HEK293T (cell line): ENCODE measurements at regions of chr19 and their contacts with region 1.

Region 1: DNA sequence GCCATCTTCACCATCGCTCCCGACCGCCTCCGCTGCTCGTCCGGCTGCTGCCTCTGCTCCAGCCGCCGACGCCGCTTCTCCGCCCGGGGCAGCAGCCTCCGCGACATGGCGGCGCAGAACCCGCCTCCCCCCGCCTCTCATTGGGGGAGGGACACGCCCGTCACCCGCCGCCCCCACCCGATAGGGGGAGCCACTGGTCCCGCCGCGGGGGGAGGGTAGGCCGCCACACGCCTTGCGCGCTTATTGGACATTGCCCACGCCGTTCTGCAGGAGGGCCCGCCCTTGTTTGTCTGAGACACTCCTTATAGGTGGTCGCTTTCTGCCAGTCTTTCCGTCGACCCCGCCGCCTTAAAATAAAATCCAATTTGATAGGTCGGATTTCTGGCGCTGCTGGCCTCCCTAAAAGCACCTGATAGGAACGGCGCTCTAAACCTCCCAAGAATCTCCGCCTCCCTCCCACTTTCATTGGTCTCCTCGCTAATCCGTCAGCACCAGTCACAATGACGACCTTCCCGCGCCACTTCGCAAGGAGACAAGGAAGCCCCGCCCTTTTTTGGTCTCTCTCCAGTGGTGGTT is at the start of gene HNRNPL:
- DNase-seq: peak; percentile 90

Region 2: GRCh38 chr19:38707512-38708114 is 142.3 kb before region 1 on chr19:
- CTCF ChIA-PET with region 1: no interaction called
- POLR2A ChIA-PET with region 1: no interaction called
- DNase-seq: no peak

Region 3: GRCh38 chr19:38792250-38793111 is 57.5 kb before region 1 on chr19:
- CTCF ChIA-PET with region 1: no interaction called
- POLR2A ChIA-PET with region 1: no interaction called
- DNase-seq: no peak

Region 4: DNA sequence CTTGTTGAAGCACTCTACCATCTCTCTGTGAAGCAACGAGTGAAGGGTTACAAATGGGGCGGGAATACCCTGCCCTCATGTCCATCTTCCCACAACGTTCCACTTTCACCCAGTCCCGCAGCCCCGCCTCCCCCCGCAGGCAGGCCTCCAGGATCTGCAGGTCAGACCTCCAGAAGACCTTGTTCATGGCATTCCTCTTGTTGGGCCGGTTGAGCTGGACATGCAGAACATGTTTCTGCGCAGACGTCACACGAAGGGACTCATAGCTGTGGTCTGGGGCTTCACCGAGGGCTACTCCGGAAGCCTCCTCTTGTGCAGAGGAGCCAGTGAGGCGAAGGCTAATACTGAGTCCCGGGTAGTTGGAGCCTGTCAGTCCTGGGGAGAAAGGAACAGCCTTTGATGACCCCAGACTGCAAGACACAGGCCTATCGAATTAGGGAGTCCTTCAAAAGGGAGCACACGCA is 18.8 kb before region 1 on chr19:
- CTCF ChIA-PET with region 1: no interaction called
- POLR2A ChIA-PET with region 1: interaction called, 17 read pairs
- DNase-seq: peak; percentile 50

Region 5: GRCh38 chr19:38838573-38839269 is 11.2 kb before region 1 on chr19:
- CTCF ChIA-PET with region 1: no interaction called
- POLR2A ChIA-PET with region 1: interaction called, 23 read pairs
- DNase-seq: no peak

Region 6: DNA sequence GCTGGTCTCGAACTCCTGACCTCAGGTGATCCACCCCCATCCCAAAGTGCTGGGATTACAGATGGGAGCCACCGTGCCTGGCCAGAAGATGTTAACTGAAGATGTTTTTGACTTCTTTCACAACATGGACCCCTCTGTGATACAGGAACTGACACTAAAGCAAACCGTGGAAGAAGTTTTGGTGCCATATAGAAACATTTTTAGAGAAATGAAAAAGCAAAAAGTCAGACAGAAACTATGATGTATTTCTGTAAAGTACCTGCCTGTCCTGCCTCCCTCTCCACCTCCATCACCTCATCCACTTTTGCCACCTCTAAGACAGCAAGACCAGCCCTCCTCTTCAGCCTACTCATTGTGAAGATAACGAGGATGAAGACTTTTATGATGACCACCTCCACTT is 171.1 kb after region 1 on chr19:
- CTCF ChIA-PET with region 1: no interaction called
- POLR2A ChIA-PET with region 1: no interaction called
- DNase-seq: no peak